Ascending aorta (tissue), 2 donors: ENCODE measurements at regions of chr15 and their contacts with region 1.

Region 1: GRCh38 chr15:69652751-69653305 is 200.2 kb downstream of the RPLP1 start:
- DNase-seq: peak in 1 of 2 donors; percentile 65
- H3K4me3 ChIP-seq: no peak overlapping the region
- H3K27ac ChIP-seq: no peak overlapping the region
- H3K4me1 ChIP-seq: no peaks in the 10 kb centered on the region
- H3K27me3 ChIP-seq: no peaks in the 10 kb centered on the region
- CTCF ChIP-seq: peak; percentile 19 to 68 (median 53)

Region 2: DNA sequence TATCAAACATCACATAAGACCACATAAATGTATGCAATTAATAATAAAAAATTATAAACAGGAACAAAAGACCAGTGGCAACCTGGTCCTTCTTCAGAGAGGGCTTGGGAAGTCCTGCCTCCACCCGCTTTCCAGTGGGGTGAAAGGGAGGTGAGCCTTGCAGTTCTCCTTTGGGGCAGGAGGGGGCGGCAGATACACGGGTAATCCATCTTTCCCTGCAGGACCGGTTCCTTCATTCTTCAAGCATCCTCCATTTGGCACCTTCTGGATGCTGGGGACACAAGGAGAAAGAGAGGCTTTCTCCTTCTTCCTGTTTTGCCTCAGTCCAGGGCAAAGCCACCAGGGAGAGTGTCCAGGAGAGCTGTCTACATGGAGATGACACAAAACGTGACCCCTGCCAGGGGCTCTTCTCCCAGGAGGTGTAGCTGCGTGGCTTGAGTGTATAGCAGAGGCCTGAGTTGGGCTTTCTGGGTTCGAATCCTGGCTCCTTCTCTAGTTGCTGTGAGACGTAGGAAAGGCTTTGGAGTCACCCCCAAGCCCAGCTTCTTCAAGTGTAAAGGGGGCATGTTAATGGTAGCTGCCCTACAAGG is 177.0 kb before region 1 on chr15:
- intact Hi-C with region 1: loop called (anchors 5 kb)
- DNase-seq: peak; percentile 18 to 83
- H3K4me3 ChIP-seq: no peak overlapping the region
- H3K27ac ChIP-seq: no peak overlapping the region
- H3K4me1 ChIP-seq: no peaks in the 10 kb centered on the region
- H3K27me3 ChIP-seq: no peaks in the 10 kb centered on the region
- CTCF ChIP-seq: peak; percentile 82 to 93 (median 92)

Region 3: GRCh38 chr15:69523010-69524001 is 129.5 kb before region 1 on chr15:
- intact Hi-C with region 1: loop called (anchors 2 kb)
- DNase-seq: peak; percentile 22 to 78
- H3K4me3 ChIP-seq: no peak overlapping the region
- H3K27ac ChIP-seq: no peak overlapping the region
- H3K4me1 ChIP-seq: no peaks in the 10 kb centered on the region
- H3K27me3 ChIP-seq: no peaks in the 10 kb centered on the region
- CTCF ChIP-seq: peak; percentile 46 to 67 (median 59)

Region 4: GRCh38 chr15:69885173-69885955 is 232.5 kb after region 1 on chr15:
- intact Hi-C with region 1: no loop called
- DNase-seq: no peak
- H3K4me3 ChIP-seq: no peak overlapping the region
- H3K27ac ChIP-seq: no peak overlapping the region
- H3K4me1 ChIP-seq: no peaks in the 10 kb centered on the region
- H3K27me3 ChIP-seq: no peaks in the 10 kb centered on the region
- CTCF ChIP-seq: no peak